Transverse colon (tissue), 4 donors: ENCODE measurements at regions of chr3 and their contacts with region 1.

Region 1: DNA sequence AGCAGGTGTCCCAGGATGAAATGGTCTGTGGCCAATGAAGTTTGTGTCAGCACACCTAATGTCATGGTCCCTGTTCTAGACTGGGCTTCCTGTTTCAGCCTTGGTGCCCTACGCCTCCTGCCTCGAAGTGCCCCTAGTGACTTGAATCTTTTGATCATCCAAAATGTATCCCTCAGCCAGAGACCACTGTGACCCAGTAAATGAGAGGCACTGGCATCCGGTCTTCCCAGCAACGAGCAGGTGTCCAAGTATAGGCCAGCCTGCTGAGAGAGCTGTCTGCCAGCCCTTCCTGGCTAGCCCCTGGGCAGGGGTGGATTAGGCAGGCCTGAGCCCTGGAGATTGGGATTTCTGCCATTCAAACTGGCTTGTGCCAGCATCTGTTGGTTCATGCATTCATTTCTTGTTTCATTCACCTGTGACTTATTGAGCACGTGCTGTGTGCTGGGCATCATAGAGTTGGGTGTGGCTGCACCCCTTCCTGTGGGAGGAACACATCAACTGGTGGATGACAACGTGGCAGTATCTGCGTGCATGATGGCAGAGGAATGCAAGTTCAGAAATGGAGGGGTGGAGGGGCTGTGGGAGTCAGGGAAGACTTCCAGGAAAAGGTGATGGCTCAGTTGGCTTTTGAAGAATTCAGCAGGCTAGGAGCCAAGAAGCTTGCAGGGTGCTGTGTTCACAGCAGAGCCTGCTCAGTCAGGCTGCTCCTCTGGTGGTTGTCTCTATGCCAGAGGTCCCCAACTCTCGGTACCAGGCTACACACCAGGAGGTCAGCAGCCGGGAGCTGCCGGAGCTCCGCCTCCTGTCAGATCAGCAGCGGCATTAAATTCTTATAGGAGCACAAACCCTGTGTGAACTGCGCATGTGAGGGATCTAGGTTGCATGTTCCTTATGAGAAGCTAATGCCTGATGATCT is 21.6 kb downstream of the ESYT3 start:
- DNase-seq: no peak
- H3K4me3 ChIP-seq: no peak overlapping the region
- H3K27ac ChIP-seq: no peak overlapping the region
- H3K4me1 ChIP-seq: no peaks in the 10 kb centered on the region
- H3K27me3 ChIP-seq: no peaks in the 10 kb centered on the region
- CTCF ChIP-seq: no peak
- EP300 ChIP-seq: no peak
- POLR2A ChIP-seq: no peak

Region 2: GRCh38 chr3:138356730-138357405 is 99.2 kb before region 1 on chr3:
- in situ Hi-C with region 1: no loop called
- intact Hi-C with region 1: no loop called
- DNase-seq: no peak
- H3K4me3 ChIP-seq: no peak overlapping the region
- H3K27ac ChIP-seq: no peak overlapping the region
- H3K4me1 ChIP-seq: no peaks in the 10 kb centered on the region
- H3K27me3 ChIP-seq: no peaks in the 10 kb centered on the region
- CTCF ChIP-seq: no peak
- EP300 ChIP-seq: no peak
- POLR2A ChIP-seq: no peak

Region 3: GRCh38 chr3:138479438-138479863 is 23.4 kb after region 1 on chr3:
- in situ Hi-C with region 1: no loop called
- intact Hi-C with region 1: loop called (anchors 2 kb)
- DNase-seq: no peak
- H3K4me3 ChIP-seq: no peak overlapping the region
- H3K27ac ChIP-seq: no peak overlapping the region
- H3K4me1 ChIP-seq: no peaks in the 10 kb centered on the region
- H3K27me3 ChIP-seq: no peaks in the 10 kb centered on the region
- CTCF ChIP-seq: peak; percentile 28 to 51 (median 41)
- EP300 ChIP-seq: no peak
- POLR2A ChIP-seq: no peak

Region 4: DNA sequence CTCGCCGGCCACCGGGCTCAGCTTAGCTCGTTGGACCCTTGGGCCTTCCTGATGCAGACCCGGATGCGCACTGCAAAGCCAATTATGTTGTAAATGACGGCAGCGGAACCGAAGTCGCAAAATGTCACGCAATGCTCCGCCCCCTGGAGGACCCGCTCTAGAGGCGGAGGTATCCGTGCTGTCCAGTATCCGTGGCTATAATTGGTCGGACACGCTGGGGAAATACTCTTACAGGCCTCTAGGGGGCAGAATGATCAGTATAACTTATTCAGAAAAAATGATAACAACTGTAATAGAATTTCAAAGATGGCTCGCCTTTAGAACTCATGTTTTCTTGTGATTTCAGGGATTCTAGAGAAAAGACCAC is 564.8 kb after region 1 on chr3 and contains the start of gene PRR23B:
- in situ Hi-C with region 1: no loop called
- intact Hi-C with region 1: no loop called
- DNase-seq: no peak
- H3K4me3 ChIP-seq: no peak within 1 kb of the TSS
- H3K27ac ChIP-seq: no peak within 1 kb of the TSS
- H3K4me1 ChIP-seq: no peaks in the 10 kb centered on the region
- H3K27me3 ChIP-seq: no peaks in the 10 kb centered on the region
- CTCF ChIP-seq: peak in 3 of 5 experiments; percentile 13 to 27 (median 16)
- EP300 ChIP-seq: no peak
- POLR2A ChIP-seq: no peak
- total RNA-seq, gene PRR23B: not detected

Region 5: GRCh38 chr3:139084176-139084575 is 628.1 kb after region 1 on chr3:
- in situ Hi-C with region 1: no loop called
- intact Hi-C with region 1: no loop called
- DNase-seq: no peak
- H3K4me3 ChIP-seq: no peak overlapping the region
- H3K27ac ChIP-seq: no peak overlapping the region
- H3K4me1 ChIP-seq: no peaks in the 10 kb centered on the region
- H3K27me3 ChIP-seq: no peaks in the 10 kb centered on the region
- CTCF ChIP-seq: no peak
- EP300 ChIP-seq: no peak
- POLR2A ChIP-seq: no peak